ENCODE measurements at regions of chr4 and their contacts with region 1.

Region 1: GRCh38 chr4:75989846-75990528 is 758 bp downstream of the SDAD1 start:
- DNase-seq: no peak
- H3K4me3 Mint-ChIP-seq: peak overlapping the region; percentile 88
- H3K27ac Mint-ChIP-seq: peak overlapping the region; percentile 83
- H3K4me1 Mint-ChIP-seq: peaks cover 37% of the 10 kb centered on the region
- H3K27me3 Mint-ChIP-seq: no peaks in the 10 kb centered on the region

Region 2: DNA sequence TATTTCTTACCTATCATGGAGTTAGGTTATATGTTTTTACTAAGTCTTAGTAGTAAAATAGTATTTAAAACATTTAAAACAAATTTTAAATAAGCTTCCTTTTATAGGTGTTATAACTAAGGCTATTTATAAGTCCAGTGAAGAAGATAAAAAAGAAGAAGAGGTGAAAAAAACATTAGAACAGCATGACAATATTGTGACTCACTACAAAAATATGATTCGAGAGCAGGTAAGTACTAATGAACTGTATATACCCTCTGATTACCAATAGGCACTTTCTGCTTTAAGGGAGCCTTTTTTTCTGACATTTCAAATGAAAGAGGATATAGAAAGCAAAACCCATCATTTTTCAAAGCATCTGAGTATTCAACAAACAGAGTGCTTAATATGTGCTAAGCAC is 189.0 kb before region 1 on chr4:
- CTCF ChIA-PET with region 1: no interaction called
- POLR2A ChIA-PET with region 1: no interaction called
- DNase-seq: no peak
- H3K4me3 Mint-ChIP-seq: no peak overlapping the region
- H3K27ac Mint-ChIP-seq: no peak overlapping the region
- H3K4me1 Mint-ChIP-seq: no peaks in the 10 kb centered on the region
- H3K27me3 Mint-ChIP-seq: no peaks in the 10 kb centered on the region

Region 3: DNA sequence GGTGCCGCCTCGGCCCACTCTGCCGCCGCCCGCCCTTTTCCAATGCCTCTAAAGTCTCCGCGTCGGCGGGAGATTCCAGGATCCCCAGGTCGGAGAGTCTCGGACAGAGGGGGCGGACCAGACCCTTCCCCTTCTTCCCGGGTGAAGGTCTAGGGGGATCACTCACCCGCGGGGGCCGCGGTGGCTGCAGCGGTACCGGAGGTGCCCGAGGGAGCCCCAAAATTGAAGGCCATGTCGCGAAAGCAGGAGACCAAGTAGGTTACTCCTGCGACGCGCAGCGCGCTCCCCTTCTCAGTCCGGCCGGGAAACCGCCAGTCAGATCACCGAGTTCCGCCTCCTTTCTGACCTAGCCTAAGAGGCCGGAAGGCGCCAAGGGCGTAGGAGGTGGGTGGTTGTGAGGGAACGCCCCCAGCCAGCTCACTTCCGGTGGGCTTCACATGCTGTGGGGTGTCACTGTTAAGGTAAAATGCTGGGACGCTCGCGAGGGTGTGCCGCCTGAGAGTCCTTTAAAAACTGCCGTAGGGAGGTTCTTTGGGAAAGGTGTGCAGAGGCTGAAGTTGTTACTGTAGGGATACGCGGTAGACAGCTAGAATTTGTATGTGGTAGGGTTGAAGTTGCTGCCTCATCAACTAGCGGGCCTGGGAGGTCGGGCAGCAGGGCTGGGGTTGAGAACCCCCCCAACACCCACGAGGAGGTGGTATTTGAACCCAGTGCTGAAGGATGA is 158.3 kb after region 1 on chr4 and contains the start of gene NUP54:
- CTCF ChIA-PET with region 1: no interaction called
- POLR2A ChIA-PET with region 1: interaction called, 10 read pairs
- DNase-seq: peak; percentile 96
- H3K4me3 Mint-ChIP-seq: peak within 1 kb of the TSS; percentile 89
- H3K27ac Mint-ChIP-seq: peak within 1 kb of the TSS; percentile 81
- H3K4me1 Mint-ChIP-seq: peaks cover 34% of the 10 kb centered on the region
- H3K27me3 Mint-ChIP-seq: no peaks in the 10 kb centered on the region
- total RNA-seq, gene NUP54: 48.9 to 58.6 TPM

Measured in activated CD4-positive, alpha-beta memory T cell treated with anti-CD3 and anti-CD28 coated beads, Interleukin-2, amount 10 ng/mL, durations not matched to agents 7 days and 5 days (primary cell).